Sciatic nerve (tissue), 2 donors: ENCODE measurements at regions of chr6 and their contacts with region 1.

Region 1: DNA sequence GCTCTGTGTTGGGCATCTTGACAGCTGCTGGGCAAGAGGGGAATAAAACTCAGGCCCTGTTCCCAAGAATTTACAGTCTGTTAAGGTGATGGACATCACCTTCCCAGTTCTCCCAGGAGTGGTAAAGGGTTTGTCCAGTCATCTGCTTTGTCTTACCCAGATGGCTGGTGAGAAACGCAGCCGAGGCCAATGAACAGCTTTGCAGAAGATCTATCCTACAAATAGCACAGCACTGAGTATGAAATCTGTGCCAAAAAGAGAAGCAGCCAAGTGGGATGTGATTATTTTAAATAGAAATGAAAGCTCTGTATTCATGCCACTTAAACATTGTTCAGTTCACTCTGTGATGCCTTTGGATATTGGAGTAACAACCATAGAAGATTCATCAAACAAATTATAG is 132.7 kb upstream of the SLC22A16 start:
- DNase-seq: no peak
- ATAC-seq: no peak

Region 2: DNA sequence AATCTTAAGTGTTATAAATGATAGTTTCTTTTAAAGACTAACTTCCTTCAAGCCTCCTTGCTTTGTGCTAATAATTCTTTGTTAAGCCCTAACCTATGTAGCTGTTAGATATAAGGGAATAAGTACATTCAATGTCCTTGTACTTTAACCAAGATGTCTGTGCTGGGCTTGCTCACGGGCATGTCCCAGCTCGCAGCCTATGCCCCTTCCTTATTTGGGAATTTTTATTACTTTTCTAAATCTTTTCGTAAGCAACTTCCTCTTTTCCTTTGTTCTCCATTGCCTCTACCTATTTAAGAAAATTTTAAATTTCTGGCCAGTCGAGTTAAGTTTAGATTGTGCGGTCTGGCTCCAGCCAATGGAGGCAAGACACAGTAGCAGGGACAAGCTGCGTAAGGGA is 232.2 kb after region 1 on chr6:
- intact Hi-C with region 1: loop called (anchors 5 kb)
- DNase-seq: no peak
- ATAC-seq: no peak